Activated CD4-positive, alpha-beta T cell treated with anti-CD3 and anti-CD28 coated beads for 36 hours (primary cell): ENCODE measurements at regions of chr5 and their contacts with region 1.

Region 1: GRCh38 chr5:176671890-176672747 is 24.8 kb downstream of the TSPAN17 start:
- DNase-seq: no peak
- ATAC-seq: no peak
- H3K4me3 Mint-ChIP-seq: no peak overlapping the region
- H3K27ac Mint-ChIP-seq: no peak overlapping the region
- H3K4me1 Mint-ChIP-seq: no peaks in the 10 kb centered on the region
- H3K27me3 Mint-ChIP-seq: peaks cover 8% of the 10 kb centered on the region

Region 2: DNA sequence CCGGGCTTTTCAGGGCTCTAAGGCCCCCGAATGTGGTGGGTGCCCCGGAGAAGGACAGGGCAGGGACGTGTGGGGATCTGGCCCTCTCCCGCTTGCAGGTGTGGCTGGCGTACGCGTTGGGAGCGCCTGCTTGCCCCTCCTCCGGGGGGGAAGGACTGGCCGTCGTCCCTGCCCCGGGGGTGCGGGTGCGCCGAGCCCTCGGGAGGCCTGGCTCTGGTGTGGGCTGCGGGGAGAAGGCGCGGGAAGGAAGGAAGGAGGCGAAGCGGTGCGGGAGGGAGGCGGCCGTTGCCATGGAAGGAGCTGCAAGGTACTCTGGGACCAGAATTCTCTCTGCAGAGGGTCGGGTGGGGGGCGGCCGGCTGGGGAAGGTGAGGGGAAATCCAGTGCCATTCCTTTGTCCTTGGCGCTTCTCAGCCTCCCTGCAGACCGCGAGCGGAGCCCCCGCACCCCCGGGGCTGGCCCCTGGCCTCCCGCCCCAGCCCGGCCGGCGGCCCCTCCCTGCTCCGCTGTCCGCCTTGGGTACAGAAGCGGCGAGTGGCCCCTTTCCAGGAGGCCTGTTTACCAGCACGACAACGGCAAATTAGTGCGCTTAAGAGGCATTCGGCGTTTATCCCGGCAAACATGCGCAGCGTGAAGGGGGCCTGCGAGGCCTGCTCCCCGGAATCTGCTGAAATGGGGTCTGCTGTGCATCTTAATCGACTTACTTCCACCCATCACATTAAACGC is 71.2 kb after region 1 on chr5:
- CTCF ChIA-PET with region 1: interaction called, 3 read pairs
- POLR2A ChIA-PET with region 1: no interaction called
- intact Hi-C with region 1: loop called in 1 of 2 experiments (anchors 2 kb)
- DNase-seq: no peak
- ATAC-seq: no peak
- H3K4me3 Mint-ChIP-seq: no peak overlapping the region
- H3K27ac Mint-ChIP-seq: no peak overlapping the region
- H3K4me1 Mint-ChIP-seq: peaks cover 25% of the 10 kb centered on the region
- H3K27me3 Mint-ChIP-seq: peaks cover 74% of the 10 kb centered on the region